GM12878 (cell line): ENCODE measurements at regions of chrX and their contacts with region 1.

Region 1: DNA sequence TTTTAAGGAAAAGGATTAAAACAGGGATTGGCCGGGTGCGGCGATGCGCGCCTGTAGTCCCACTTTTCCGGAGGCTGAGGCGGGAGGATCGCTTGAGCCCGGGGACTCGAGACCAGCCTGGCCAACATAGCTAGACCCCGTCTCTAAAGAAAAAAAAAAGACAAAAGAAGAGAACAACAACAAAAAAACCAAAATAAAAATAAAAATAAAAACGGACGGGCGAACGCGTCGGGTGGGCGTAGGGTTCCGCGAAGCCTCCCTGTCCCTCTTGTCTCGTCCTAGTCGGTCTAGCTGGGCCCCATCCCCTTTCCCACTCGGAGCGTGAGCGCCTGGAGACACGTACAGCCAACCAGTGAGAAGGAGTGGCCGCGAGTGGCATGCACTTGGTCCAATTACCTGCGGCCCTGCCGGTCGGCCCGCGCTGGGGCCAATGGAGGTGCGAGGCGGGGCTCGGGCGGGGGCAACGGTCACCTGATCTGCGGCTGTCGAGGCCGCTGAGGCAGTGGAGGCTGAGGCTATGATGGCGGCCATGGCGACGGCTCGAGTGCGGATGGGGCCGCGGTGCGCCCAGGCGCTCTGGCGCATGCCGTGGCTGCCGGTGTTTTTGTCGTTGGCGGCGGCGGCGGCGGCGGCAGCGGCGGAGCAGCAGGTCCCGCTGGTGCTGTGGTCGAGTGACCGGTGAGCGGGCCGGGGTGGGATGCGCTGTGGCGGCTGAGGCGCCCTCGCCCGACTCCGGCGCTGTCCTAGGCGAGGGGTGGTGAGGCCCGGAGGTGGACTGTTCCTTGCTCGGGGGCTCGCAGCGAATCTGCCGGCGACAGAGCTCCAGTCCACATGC is at the start of gene ATP6AP1:
- DNase-seq: peak; percentile 73
- ATAC-seq: peak; percentile 99
- H3K4me3 ChIP-seq: peak within 1 kb of the TSS; percentile 73
- H3K27ac ChIP-seq: 0 out of 2 replicates have a peak within 1 kb of the TSS, but pooled peaks have one; percentile 4
- H3K4me1 ChIP-seq: no peaks in the 10 kb centered on the region
- H3K27me3 ChIP-seq: no peaks in the 10 kb centered on the region
- CTCF ChIP-seq: no peak
- EP300 ChIP-seq: no peak
- POLR2A ChIP-seq: peak; percentile 87
- RAD21 ChIP-seq: no peak
- polyA plus RNA-seq, gene ATP6AP1: 4.5 to 7.8 TPM

Region 2: DNA sequence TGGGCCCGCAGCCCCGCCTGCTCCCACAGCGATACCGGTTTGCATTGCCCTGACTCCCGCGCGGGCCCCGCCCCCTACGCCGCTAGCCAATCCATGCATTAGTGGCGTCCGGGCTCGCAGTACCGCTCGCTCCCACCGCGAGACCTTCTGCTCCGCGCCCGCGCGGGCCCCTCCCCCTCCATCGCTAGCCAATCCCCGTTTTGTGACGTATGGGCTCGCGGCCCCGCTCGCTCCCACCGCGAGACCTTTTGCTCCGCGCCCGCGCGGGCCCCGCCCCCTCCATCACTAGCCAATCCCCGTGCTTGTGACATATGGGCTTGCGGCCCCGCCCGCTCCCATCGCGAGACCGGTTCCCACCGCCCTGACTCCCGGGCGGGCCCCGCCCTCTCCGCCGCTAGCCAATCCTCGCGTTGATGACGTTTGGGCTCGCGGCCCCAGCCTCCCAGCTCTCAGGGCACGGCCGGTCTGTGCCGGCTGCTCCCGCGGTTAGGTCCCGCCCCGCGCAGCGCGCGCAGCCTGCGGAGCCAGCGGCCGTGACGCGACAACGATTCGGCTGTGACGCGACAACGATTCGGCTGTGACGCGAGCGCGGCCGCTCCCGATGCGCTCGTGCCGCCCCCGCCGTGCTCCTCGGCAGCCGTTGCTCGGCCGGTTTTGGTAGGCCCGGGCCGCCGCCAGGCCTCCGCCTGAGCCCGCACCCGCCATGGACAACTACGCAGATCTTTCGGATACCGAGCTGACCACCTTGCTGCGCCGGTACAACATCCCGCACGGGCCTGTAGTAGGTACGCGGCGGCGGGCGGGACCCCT is 49.4 kb before region 1 on chrX and contains the start of gene EMD:
- CTCF ChIA-PET with region 1: interaction called, 12 read pairs
- POLR2A ChIA-PET with region 1: interaction called, 3 read pairs
- RAD21 ChIA-PET with region 1: no interaction called
- SMC1A ChIA-PET with region 1: no interaction called
- in situ Hi-C with region 1: no loop called
- intact Hi-C with region 1: loop called (anchors 10 kb)
- DNase-seq: peak; percentile 87
- ATAC-seq: peak; percentile 89
- H3K4me3 ChIP-seq: peak within 1 kb of the TSS; percentile 88
- H3K27ac ChIP-seq: peak within 1 kb of the TSS; percentile 93
- H3K4me1 ChIP-seq: peaks cover 2% of the 10 kb centered on the region
- H3K27me3 ChIP-seq: no peaks in the 10 kb centered on the region
- CTCF ChIP-seq: no peak
- EP300 ChIP-seq: no peak
- POLR2A ChIP-seq: peak; percentile 82
- RAD21 ChIP-seq: no peak
- polyA plus RNA-seq, gene EMD: 0.76 to 1.9 TPM

Region 3: GRCh38 chrX:154411322-154411980 is 16.9 kb before region 1 on chrX and contains the start of gene TAFAZZIN:
- CTCF ChIA-PET with region 1: interaction called, 3 read pairs
- POLR2A ChIA-PET with region 1: interaction called, 32 read pairs
- RAD21 ChIA-PET with region 1: interaction called, 9 read pairs
- SMC1A ChIA-PET with region 1: interaction called, 3 read pairs
- in situ Hi-C with region 1: no loop called
- intact Hi-C with region 1: no loop called
- DNase-seq: no peak
- ATAC-seq: peak; percentile 80
- H3K4me3 ChIP-seq: peak within 1 kb of the TSS; percentile 81
- H3K27ac ChIP-seq: peak within 1 kb of the TSS; percentile 86
- H3K4me1 ChIP-seq: no peaks in the 10 kb centered on the region
- H3K27me3 ChIP-seq: no peaks in the 10 kb centered on the region
- CTCF ChIP-seq: peak in 1 of 3 experiments; percentile 8; a peak in 1 of 6 replicates
- EP300 ChIP-seq: no peak
- POLR2A ChIP-seq: peak; percentile 82
- RAD21 ChIP-seq: no peak
- polyA plus RNA-seq, gene TAFAZZIN: 0.71 to 1.4 TPM

Region 4: GRCh38 chrX:154547245-154548027 is 119.0 kb after region 1 on chrX and contains the start of gene IKBKG:
- CTCF ChIA-PET with region 1: no interaction called
- POLR2A ChIA-PET with region 1: no interaction called
- RAD21 ChIA-PET with region 1: no interaction called
- SMC1A ChIA-PET with region 1: no interaction called
- in situ Hi-C with region 1: no loop called
- intact Hi-C with region 1: no loop called
- DNase-seq: peak; percentile 57
- ATAC-seq: peak; percentile 89
- H3K4me3 ChIP-seq: peak within 1 kb of the TSS; percentile 72
- H3K27ac ChIP-seq: peak within 1 kb of the TSS; percentile 65
- H3K4me1 ChIP-seq: peaks cover 14% of the 10 kb centered on the region
- H3K27me3 ChIP-seq: no peaks in the 10 kb centered on the region
- CTCF ChIP-seq: no peak
- EP300 ChIP-seq: no peak
- POLR2A ChIP-seq: peak; percentile 67
- RAD21 ChIP-seq: no peak
- polyA plus RNA-seq, gene IKBKG: 0.35 to 1.5 TPM